Activated CD4-positive, alpha-beta T cell treated with anti-CD3 and anti-CD28 coated beads, Interleukin-2, amount 10 ng/mL, durations not matched to agents 24 days and 14 days (primary cell): ENCODE measurements at regions of chr22 and their contacts with region 1.

Region 1: GRCh38 chr22:45268958-45269844 is 15.5 kb upstream of the UPK3A start:
- DNase-seq: peak; percentile 97
- H3K4me3 Mint-ChIP-seq: peak overlapping the region; percentile 84
- H3K27ac Mint-ChIP-seq: peak overlapping the region; percentile 83
- H3K4me1 Mint-ChIP-seq: peaks cover 12% of the 10 kb centered on the region
- H3K27me3 Mint-ChIP-seq: peaks cover 37% of the 10 kb centered on the region

Region 2: DNA sequence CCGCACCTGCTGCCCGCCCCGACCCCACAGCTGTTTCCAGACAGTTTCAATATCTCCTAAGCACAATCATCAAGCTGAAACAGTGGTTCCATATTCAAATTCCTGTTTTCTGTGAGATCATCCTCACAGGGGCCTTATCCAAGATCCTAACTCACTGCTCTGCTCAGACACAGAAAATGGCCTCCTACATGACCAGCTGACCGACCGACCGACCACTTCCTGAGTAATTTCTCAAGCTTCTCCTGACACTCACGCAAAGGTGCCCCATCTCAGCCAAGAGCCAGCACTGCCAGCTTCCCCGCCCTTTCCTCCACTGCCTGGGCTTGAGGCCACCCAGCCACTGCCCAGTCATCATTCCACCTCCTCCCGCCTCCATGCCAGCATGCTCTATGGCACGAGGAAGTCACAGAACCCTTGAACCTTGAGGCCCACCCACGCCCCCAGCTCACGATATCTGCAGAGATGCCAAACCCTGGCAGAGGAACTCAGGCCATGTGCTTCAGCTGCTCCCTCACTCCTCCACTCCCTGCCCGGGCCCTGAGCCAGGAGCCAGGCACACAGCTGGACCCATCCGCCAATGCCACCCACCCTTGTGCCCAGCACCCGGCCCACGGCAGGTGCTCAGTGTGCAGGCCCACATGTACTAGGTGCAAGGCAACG is 42.5 kb before region 1 on chr22:
- intact Hi-C with region 1: no loop called
- DNase-seq: no peak
- H3K4me3 Mint-ChIP-seq: no peak overlapping the region
- H3K27ac Mint-ChIP-seq: no peak overlapping the region
- H3K4me1 Mint-ChIP-seq: peaks cover 9% of the 10 kb centered on the region
- H3K27me3 Mint-ChIP-seq: no peaks in the 10 kb centered on the region

Region 3: DNA sequence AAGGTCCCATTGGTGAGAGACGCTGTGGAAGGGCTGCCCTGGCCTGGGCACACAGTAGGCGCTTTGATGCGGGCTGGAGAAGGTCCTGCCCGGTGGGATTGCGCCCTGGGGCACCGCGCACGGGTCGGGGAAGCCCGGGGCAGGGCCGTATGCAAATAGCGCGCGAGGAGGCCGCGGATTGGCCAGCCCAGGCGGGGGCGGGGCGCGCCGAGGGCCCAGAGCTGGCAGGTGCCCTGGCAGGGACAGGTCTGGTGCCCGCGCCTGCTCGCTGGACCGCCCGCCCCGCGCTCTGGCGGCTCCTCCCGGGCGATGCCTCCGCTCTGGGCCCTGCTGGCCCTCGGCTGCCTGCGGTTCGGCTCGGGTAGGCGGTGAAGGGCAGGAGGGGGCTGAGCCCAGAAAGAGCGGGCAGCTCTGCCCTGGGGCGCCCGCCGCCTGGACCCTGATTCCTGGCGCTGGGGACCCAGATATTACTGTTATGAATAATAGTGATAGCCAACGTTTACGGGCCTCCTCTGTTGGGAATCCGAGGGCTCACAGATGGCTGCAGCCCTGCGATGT is 15.6 kb after region 1 on chr22 and contains the start of gene UPK3A:
- intact Hi-C with region 1: no loop called
- DNase-seq: peak; percentile 87
- H3K4me3 Mint-ChIP-seq: no peak within 1 kb of the TSS
- H3K27ac Mint-ChIP-seq: no peak within 1 kb of the TSS
- H3K4me1 Mint-ChIP-seq: peaks cover 6% of the 10 kb centered on the region
- H3K27me3 Mint-ChIP-seq: peaks cover 23% of the 10 kb centered on the region
- total RNA-seq, gene UPK3A: not detected in 2 replicates

Region 4: GRCh38 chr22:45309472-45310227 is 40.4 kb after region 1 on chr22 and contains the start of gene FAM118A:
- intact Hi-C with region 1: loop called (anchors 2 kb)
- DNase-seq: peak; percentile 100
- H3K4me3 Mint-ChIP-seq: peak within 1 kb of the TSS; percentile 93
- H3K27ac Mint-ChIP-seq: peak within 1 kb of the TSS; percentile 91
- H3K4me1 Mint-ChIP-seq: peaks cover 43% of the 10 kb centered on the region
- H3K27me3 Mint-ChIP-seq: no peaks in the 10 kb centered on the region
- total RNA-seq, gene FAM118A: 32.0 and 32.5 TPM in 2 replicates

Region 5: GRCh38 chr22:45397806-45398205 is 128.6 kb after region 1 on chr22:
- intact Hi-C with region 1: loop called (anchors 1 kb)
- DNase-seq: peak; percentile 62
- H3K4me3 Mint-ChIP-seq: no peak overlapping the region
- H3K27ac Mint-ChIP-seq: no peak overlapping the region
- H3K4me1 Mint-ChIP-seq: no peaks in the 10 kb centered on the region
- H3K27me3 Mint-ChIP-seq: peaks cover 13% of the 10 kb centered on the region

Region 6: GRCh38 chr22:45435544-45436139 is 166.4 kb after region 1 on chr22:
- intact Hi-C with region 1: loop called (anchors 1 kb)
- DNase-seq: peak; percentile 94
- H3K4me3 Mint-ChIP-seq: no peak overlapping the region
- H3K27ac Mint-ChIP-seq: peak overlapping the region; percentile 37
- H3K4me1 Mint-ChIP-seq: peaks cover 10% of the 10 kb centered on the region
- H3K27me3 Mint-ChIP-seq: no peaks in the 10 kb centered on the region

Region 7: GRCh38 chr22:45553351-45554039 is 284.3 kb after region 1 on chr22:
- intact Hi-C with region 1: loop called (anchors 5 kb)
- DNase-seq: peak; percentile 83
- H3K4me3 Mint-ChIP-seq: no peak overlapping the region
- H3K27ac Mint-ChIP-seq: no peak overlapping the region
- H3K4me1 Mint-ChIP-seq: no peaks in the 10 kb centered on the region
- H3K27me3 Mint-ChIP-seq: peaks cover 2% of the 10 kb centered on the region